ENCODE measurements at regions of chr5 and their contacts with region 1.

Region 1: GRCh38 chr5:59673438-59674058 is 220.0 kb downstream of the PDE4D start:
- DNase-seq: no peak
- H3K4me3 Mint-ChIP-seq: no peak overlapping the region
- H3K27ac Mint-ChIP-seq: no peak overlapping the region
- H3K4me1 Mint-ChIP-seq: no peaks in the 10 kb centered on the region
- H3K27me3 Mint-ChIP-seq: peaks cover 10% of the 10 kb centered on the region

Region 2: DNA sequence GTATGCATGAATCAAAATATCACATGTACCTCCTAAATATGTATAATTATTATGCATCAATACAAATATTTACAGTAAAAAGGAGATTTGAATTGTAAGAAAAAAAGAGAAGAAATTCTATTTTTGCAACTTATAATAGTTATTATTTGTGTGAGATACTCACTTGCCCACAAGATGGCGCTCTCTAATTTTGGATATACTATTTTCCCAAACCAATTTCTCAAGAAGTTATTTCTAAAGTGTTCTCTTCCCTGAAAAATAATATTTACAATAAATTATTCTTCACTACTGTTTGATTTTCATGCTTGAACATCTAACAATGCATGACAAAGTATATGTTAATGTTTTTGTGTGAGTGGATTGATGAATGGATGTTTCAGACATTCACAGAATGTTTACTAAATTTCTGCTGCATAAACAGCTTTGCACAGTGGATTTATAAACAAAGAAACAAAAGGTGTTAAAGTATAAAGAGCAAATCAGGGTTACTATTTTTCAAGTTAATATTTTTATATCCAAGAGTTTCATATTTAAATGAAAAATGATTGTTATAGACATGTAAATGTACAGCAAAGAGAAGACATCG is 283.4 kb before region 1 on chr5:
- CTCF ChIA-PET with region 1: interaction called, 15 read pairs
- POLR2A ChIA-PET with region 1: no interaction called
- DNase-seq: no peak
- H3K4me3 Mint-ChIP-seq: no peak overlapping the region
- H3K27ac Mint-ChIP-seq: no peak overlapping the region
- H3K4me1 Mint-ChIP-seq: no peaks in the 10 kb centered on the region
- H3K27me3 Mint-ChIP-seq: peaks cover 17% of the 10 kb centered on the region

Region 3: GRCh38 chr5:59506285-59506877 is 167.2 kb before region 1 on chr5:
- CTCF ChIA-PET with region 1: interaction called, 23 read pairs
- POLR2A ChIA-PET with region 1: no interaction called
- DNase-seq: no peak
- H3K4me3 Mint-ChIP-seq: no peak overlapping the region
- H3K27ac Mint-ChIP-seq: no peak overlapping the region
- H3K4me1 Mint-ChIP-seq: no peaks in the 10 kb centered on the region
- H3K27me3 Mint-ChIP-seq: peaks cover 11% of the 10 kb centered on the region

Region 4: DNA sequence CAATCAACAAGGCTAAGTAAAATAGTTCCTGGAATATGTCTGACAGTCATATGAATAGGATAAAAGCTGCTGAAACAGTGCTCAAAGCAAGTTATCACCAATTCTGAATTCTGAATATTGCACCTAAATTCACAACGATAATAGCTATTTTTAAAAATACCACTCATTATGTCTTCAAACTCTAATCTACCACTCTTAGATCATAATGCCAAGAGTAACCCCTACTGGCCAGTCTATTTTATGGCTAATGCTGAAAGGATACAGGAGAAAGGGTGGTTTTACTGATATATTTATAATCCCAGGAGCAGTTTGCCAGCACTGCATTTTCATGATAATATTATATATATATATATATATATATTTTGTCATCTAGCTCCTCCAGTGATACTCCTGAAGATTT is 12.8 kb before region 1 on chr5:
- CTCF ChIA-PET with region 1: interaction called, 10 read pairs
- POLR2A ChIA-PET with region 1: no interaction called
- DNase-seq: no peak
- H3K4me3 Mint-ChIP-seq: no peak overlapping the region
- H3K27ac Mint-ChIP-seq: no peak overlapping the region
- H3K4me1 Mint-ChIP-seq: peaks cover 16% of the 10 kb centered on the region
- H3K27me3 Mint-ChIP-seq: peaks cover 5% of the 10 kb centered on the region

Measured in activated CD4-positive, alpha-beta memory T cell treated with anti-CD3 and anti-CD28 coated beads, Interleukin-2, amount 10 ng/mL, durations not matched to agents 7 days and 5 days (primary cell).